A673 (cell line): ENCODE measurements at regions of chr13 and their contacts with region 1.

Region 1: GRCh38 chr13:112606109-112607001 is 18.4 kb upstream of the TUBGCP3 start:
- DNase-seq: peak; percentile 94
- H3K4me3 ChIP-seq: peak overlapping the region; percentile 41
- H3K27ac ChIP-seq: peak overlapping the region; percentile 20
- H3K4me1 ChIP-seq: no peaks in the 10 kb centered on the region
- H3K27me3 ChIP-seq: peaks cover 12% of the 10 kb centered on the region
- CTCF ChIP-seq: peak; percentile 90

Region 2: GRCh38 chr13:111474136-111475002 is 1132.0 kb before region 1 on chr13:
- CTCF ChIA-PET with region 1: interaction called, 5 read pairs
- POLR2A ChIA-PET with region 1: no interaction called
- intact Hi-C with region 1: loop called (anchors 1 kb)
- DNase-seq: peak; percentile 70
- H3K4me3 ChIP-seq: no peak overlapping the region
- H3K27ac ChIP-seq: no peak overlapping the region
- H3K4me1 ChIP-seq: no peaks in the 10 kb centered on the region
- H3K27me3 ChIP-seq: peaks cover 11% of the 10 kb centered on the region
- CTCF ChIP-seq: peak; percentile 59

Region 3: DNA sequence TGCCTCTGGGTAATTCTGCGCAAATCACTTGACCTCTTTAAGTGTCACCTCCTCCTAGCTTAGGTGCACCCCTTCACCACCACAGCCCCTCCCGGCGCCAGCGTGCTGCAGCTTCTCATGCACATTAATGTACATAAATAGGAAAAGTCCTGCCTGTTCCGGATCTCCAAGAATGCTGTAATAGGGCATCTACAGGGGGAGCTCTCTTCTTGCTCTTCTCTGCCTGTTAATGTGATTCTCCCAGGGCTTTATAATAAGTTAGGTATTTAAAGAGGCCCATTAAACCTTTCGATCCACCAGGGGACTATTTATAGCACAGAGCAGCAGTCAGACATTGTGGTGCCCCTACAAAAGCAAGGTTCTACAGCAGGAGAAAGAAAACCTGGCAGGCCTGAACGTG is 504.1 kb before region 1 on chr13:
- CTCF ChIA-PET with region 1: no interaction called
- POLR2A ChIA-PET with region 1: no interaction called
- intact Hi-C with region 1: loop called (anchors 5 kb)
- DNase-seq: peak; percentile 81
- H3K4me3 ChIP-seq: no peak overlapping the region
- H3K27ac ChIP-seq: peak overlapping the region; percentile 53
- H3K4me1 ChIP-seq: peaks cover 62% of the 10 kb centered on the region
- H3K27me3 ChIP-seq: peaks cover 18% of the 10 kb centered on the region
- CTCF ChIP-seq: peak; percentile 66

Region 4: GRCh38 chr13:112744476-112745021 is 138.2 kb after region 1 on chr13:
- CTCF ChIA-PET with region 1: no interaction called
- POLR2A ChIA-PET with region 1: no interaction called
- intact Hi-C with region 1: no loop called
- DNase-seq: no peak
- H3K4me3 ChIP-seq: no peak overlapping the region
- H3K27ac ChIP-seq: no peak overlapping the region
- H3K4me1 ChIP-seq: peaks cover 10% of the 10 kb centered on the region
- H3K27me3 ChIP-seq: no peaks in the 10 kb centered on the region
- CTCF ChIP-seq: no peak